PC-3 (cell line): ENCODE measurements at regions of chr7 and their contacts with region 1.

Region 1: DNA sequence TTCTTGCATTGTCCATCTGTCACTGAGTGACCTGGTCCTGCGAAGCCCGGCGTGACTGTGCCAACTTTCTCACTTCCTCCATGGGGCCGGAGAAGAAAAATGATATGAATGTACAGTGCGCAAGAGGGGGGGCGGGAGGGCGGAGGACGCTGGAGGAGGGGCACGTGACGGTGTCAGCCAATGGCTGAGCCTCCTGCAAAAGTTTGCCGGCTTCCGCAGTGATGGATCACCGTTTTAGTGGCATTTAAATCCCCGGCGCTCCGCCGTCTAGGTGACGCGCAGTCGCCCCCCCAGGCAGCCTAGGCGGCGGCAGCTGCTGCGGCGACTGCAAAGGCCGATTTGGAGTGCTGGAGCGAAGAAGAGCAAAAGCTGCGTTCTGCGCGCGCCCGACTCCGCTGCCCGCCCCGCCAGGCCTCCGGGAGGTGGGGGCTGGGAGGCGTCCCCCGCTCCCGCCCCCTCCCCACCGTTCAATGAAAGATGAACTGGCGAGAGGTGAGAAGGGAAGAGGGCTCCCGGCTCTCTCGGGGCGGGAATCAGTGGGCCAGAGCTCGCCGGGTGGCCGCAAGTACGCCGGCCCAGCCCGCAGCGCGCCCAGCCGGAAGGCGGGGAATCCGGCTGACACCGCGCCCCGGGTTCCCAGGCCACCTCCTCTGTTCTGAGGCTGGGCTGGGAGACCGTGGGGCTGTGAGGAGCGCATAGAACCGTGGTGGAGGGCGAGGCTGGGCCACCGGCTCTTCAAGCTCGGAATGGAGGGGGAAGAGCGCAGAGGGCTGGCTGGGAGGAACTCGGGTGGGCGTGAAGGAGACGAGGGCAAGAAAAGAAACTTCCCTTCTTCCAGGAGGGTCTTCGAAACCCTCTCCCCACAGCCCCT is at the start of gene HOXA1:
- DNase-seq: peak; percentile 94
- ATAC-seq: peak; percentile 65
- H3K4me3 ChIP-seq: peak within 1 kb of the TSS; percentile 84
- H3K27ac ChIP-seq: peak within 1 kb of the TSS; percentile 88
- H3K4me1 ChIP-seq: peaks cover 35% of the 10 kb centered on the region
- H3K27me3 ChIP-seq: no peaks in the 10 kb centered on the region
- CTCF ChIP-seq: no peak
- total RNA-seq, gene HOXA1: 1.4 and 2.0 TPM in 2 replicates

Region 2: DNA sequence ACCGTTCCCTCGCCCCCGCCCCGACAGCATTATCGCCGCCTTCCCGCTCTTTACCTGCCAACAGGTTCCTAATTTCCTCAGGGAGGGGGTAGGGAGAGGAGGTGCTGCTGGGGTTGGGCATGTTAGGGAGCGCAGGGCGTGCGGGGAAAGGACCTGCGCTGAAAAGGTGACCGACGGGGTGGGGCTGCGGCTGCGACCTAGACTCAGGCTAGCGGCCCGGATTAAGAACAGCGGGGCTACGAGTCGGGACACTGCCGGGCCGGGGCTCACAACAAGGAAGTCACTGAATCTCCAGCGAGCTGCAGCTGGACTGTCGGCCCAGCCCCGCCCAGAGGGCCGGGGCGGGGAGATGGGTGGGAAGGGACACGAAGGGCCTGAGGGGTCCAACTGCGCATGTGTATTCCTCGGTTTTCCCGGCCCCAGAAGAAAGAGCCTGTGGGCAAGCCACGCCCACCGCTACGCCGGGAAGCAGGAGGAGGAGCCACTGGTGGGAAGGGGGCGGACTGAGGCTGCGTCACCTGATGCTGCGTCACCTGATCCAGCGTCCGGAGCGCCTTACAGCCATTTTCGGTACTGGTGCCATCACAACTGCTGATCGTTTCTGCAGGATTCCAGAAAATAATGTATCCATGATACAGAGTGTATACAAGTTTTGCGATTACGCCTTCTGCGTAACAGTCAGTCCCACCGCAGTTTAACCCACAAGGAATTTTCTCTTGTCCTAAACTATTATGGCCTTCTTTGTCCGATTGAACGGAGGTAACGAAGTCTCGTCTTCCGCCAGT is 231.6 kb before region 1 on chr7 and contains the start of gene SKAP2:
- CTCF ChIA-PET with region 1: no interaction called
- POLR2A ChIA-PET with region 1: interaction called, 4 read pairs
- intact Hi-C with region 1: loop called (anchors 1 kb)
- DNase-seq: peak; percentile 99
- ATAC-seq: peak; percentile 85
- H3K4me3 ChIP-seq: peak within 1 kb of the TSS; percentile 92
- H3K27ac ChIP-seq: peak within 1 kb of the TSS; percentile 81
- H3K4me1 ChIP-seq: peaks cover 42% of the 10 kb centered on the region
- H3K27me3 ChIP-seq: no peaks in the 10 kb centered on the region
- CTCF ChIP-seq: no peak
- total RNA-seq, gene SKAP2: 9.6 and 18.4 TPM in 2 replicates

Region 3: DNA sequence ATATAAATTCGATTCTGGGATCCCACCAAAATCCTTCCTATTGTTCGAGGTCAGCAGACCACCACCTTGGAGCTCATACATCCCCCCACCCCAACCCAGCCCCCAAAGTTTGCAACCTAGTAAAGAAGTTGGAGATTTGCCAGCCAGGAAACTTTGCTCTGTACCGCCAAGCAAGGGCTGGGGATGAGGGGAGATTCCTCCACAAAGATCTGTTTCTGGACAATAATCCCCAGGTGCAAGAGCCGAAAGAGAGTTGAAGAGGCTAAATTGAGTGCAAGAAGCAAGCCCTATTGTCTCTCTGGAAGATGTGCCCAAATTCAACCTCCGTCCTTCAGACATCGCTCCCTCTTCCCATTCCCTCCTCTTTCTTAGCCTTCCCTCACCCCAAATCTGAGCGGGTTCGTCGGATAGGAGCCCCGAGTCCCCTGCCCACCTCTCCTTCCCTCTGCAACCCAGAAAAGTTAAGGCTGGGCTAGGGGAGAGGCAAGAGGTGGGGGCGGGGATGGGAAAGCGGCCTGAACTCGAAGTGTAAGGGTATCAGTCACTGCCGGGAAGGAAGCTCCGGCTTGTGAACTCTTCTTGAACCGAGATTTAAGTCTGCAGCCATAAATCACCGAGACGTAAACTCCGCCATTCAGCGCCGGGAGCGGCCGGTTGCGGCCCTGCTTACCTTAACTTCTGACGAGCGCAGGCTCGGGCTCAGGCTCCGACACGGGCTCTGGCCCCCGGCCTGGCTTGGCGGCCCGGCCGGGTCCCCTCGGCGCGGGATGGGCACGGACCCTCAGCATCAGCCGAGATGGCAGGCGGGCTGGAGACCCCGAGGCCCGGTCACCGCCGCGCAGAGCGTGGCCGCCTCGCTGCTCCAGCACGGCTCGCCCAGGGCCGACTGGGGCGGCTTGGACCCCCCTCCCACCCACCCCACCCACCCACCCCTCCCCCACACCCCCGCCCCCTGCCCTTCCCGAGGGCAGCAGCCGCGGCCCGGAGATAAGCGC is 17.1 kb after region 1 on chr7:
- CTCF ChIA-PET with region 1: interaction called, 4 read pairs
- POLR2A ChIA-PET with region 1: interaction called, 9 read pairs
- intact Hi-C with region 1: loop called (anchors 1 kb)
- DNase-seq: peak; percentile 84
- ATAC-seq: peak; percentile 31
- H3K4me3 ChIP-seq: peak overlapping the region; percentile 99
- H3K27ac ChIP-seq: peak overlapping the region; percentile 99
- H3K4me1 ChIP-seq: peaks cover 59% of the 10 kb centered on the region
- H3K27me3 ChIP-seq: no peaks in the 10 kb centered on the region
- CTCF ChIP-seq: no peak

Region 4: DNA sequence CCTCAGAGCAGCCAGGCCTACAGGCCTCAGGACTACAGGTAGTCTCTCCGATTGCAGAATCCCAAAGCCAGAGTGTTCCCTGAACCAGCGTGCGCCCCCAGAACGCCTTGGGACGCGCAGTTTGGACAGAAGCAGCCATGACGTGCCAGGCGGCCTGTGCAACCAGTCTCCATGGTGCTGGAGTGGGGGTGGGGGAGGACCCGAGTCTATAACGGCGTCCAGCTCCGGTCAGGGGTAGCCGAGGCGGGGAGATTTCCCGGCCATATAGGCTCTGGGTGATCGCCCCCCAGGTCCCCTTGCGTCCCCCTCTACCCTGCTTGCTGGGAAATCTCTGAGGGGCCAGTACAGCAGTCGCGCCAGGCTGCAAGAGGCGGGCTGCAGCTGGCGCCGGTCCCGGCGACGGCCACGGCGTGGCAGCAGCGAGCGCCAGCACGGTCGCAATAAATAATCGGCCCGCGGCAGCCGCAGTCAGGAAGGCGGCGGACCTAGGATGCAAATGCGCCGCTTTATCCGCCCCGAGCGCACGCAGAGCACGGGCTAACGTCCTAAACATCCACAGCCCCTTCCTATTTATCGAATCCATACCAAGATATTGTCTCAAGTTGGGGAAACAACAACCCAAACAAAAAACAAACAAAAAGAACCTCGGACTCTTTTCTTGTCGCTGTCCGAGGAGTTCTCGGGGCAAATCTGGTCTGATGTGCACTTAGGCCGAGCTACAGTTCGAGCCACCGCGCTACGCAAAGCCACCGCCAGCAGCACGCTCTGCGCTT is 54.6 kb after region 1 on chr7:
- CTCF ChIA-PET with region 1: interaction called, 3 read pairs
- POLR2A ChIA-PET with region 1: interaction called, 5 read pairs
- intact Hi-C with region 1: loop called (anchors 1 kb)
- DNase-seq: peak; percentile 86
- ATAC-seq: peak; percentile 33
- H3K4me3 ChIP-seq: peak overlapping the region; percentile 78
- H3K27ac ChIP-seq: peak overlapping the region; percentile 84
- H3K4me1 ChIP-seq: peaks cover 34% of the 10 kb centered on the region
- H3K27me3 ChIP-seq: no peaks in the 10 kb centered on the region
- CTCF ChIP-seq: peak; percentile 82